Activated CD4-positive, alpha-beta T cell treated with anti-CD3 and anti-CD28 coated beads for 36 hours (primary cell): ENCODE measurements at regions of chr17 and their contacts with region 1.

Region 1: GRCh38 chr17:27601069-27601975 is 29.7 kb upstream of the LGALS9 start:
- DNase-seq: peak; percentile 90
- ATAC-seq: peak; percentile 40
- H3K4me3 Mint-ChIP-seq: no peak overlapping the region
- H3K27ac Mint-ChIP-seq: no peak overlapping the region
- H3K4me1 Mint-ChIP-seq: peaks cover 14% of the 10 kb centered on the region
- H3K27me3 Mint-ChIP-seq: no peaks in the 10 kb centered on the region

Region 2: GRCh38 chr17:27181935-27182334 is 419.4 kb before region 1 on chr17:
- CTCF ChIA-PET with region 1: no interaction called
- POLR2A ChIA-PET with region 1: no interaction called
- intact Hi-C with region 1: no loop called
- DNase-seq: no peak
- ATAC-seq: no peak
- H3K4me3 Mint-ChIP-seq: no peak overlapping the region
- H3K27ac Mint-ChIP-seq: no peak overlapping the region
- H3K4me1 Mint-ChIP-seq: no peaks in the 10 kb centered on the region
- H3K27me3 Mint-ChIP-seq: no peaks in the 10 kb centered on the region

Region 3: GRCh38 chr17:27245230-27245696 is 356.1 kb before region 1 on chr17:
- CTCF ChIA-PET with region 1: interaction called, 3 read pairs
- POLR2A ChIA-PET with region 1: no interaction called
- intact Hi-C with region 1: loop called in 1 of 2 experiments (anchors 2 kb)
- DNase-seq: peak; percentile 78
- ATAC-seq: peak; percentile 96
- H3K4me3 Mint-ChIP-seq: no peak overlapping the region
- H3K27ac Mint-ChIP-seq: no peak overlapping the region
- H3K4me1 Mint-ChIP-seq: peaks cover 14% of the 10 kb centered on the region
- H3K27me3 Mint-ChIP-seq: peaks cover 12% of the 10 kb centered on the region

Region 4: GRCh38 chr17:27455914-27456680 is 145.2 kb before region 1 on chr17 and contains the start of gene KSR1:
- CTCF ChIA-PET with region 1: interaction called, 11 read pairs
- POLR2A ChIA-PET with region 1: interaction called, 3 read pairs
- intact Hi-C with region 1: loop called in 1 of 2 experiments (anchors 1 kb)
- DNase-seq: peak; percentile 92
- ATAC-seq: peak; percentile 93
- H3K4me3 Mint-ChIP-seq: peak within 1 kb of the TSS; percentile 88
- H3K27ac Mint-ChIP-seq: peak within 1 kb of the TSS; percentile 83
- H3K4me1 Mint-ChIP-seq: peaks cover 43% of the 10 kb centered on the region
- H3K27me3 Mint-ChIP-seq: peaks cover 6% of the 10 kb centered on the region
- total RNA-seq, gene KSR1: 96.6 to 113 TPM

Region 5: DNA sequence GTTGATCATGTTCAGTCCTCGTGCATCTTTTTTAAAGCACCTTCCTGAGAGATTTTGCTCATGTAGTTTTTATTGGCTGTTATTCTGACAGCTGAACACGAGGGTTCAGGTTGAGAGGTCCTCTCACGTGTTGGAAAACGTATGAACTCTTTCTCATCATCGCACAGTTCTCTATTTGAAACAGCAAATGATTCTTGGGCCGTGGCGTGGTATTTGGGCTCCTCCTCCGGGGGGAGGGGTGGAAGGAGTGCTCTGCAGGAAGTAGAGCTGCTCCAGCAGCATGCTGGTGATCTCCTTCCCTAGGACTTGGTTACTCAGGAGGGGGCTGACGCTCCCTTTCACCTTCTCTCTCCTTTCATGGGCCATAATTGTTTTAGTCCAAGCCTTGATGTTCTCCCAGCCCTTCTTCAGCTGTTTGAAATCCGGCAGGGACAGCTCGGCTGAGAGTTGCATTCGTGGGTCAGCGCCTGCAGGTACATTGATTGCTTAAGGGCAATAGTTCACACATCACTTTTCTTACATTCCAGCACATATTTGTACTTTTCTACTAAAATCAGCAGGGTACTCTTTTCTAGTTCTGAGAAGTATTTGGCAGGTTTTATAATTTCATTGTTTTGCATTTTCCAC is 74.6 kb before region 1 on chr17:
- CTCF ChIA-PET with region 1: interaction called, 7 read pairs
- POLR2A ChIA-PET with region 1: no interaction called
- intact Hi-C with region 1: loop called in 1 of 2 experiments (anchors 5 kb)
- DNase-seq: peak; percentile 80
- ATAC-seq: peak; percentile 93
- H3K4me3 Mint-ChIP-seq: no peak overlapping the region
- H3K27ac Mint-ChIP-seq: peak overlapping the region; percentile 48
- H3K4me1 Mint-ChIP-seq: peaks cover 74% of the 10 kb centered on the region
- H3K27me3 Mint-ChIP-seq: no peaks in the 10 kb centered on the region

Region 6: DNA sequence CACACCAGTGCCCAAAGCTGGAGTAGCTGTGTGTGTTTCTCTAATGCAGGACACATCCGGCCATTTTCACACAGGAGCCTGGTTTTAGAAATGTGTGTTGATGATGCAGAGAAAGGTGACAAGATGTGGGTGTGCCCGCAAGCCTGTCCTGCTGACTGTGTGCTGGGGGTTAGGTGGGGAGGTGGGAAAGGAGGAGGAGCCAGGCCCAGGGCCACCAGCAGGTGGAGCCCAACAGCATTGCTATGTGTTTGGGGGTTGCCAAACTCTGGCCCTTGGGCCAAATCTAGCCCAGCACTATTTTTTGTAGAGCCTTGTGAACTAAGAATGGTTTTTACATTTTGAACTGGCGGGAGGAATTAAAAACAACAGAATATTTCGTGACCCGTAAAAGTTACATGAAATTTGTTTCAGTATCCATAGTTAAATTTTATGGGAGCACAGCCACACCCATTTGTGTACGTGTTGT is 32.0 kb before region 1 on chr17:
- CTCF ChIA-PET with region 1: interaction called, 25 read pairs
- POLR2A ChIA-PET with region 1: no interaction called
- intact Hi-C with region 1: loop called (anchors 1 to 2 kb)
- DNase-seq: peak; percentile 83
- ATAC-seq: peak; percentile 70
- H3K4me3 Mint-ChIP-seq: no peak overlapping the region
- H3K27ac Mint-ChIP-seq: peak overlapping the region; percentile 68
- H3K4me1 Mint-ChIP-seq: peaks cover 75% of the 10 kb centered on the region
- H3K27me3 Mint-ChIP-seq: no peaks in the 10 kb centered on the region

Region 7: GRCh38 chr17:27899525-27899924 is 298.2 kb after region 1 on chr17:
- CTCF ChIA-PET with region 1: no interaction called
- POLR2A ChIA-PET with region 1: no interaction called
- intact Hi-C with region 1: no loop called
- DNase-seq: no peak
- ATAC-seq: no peak
- H3K4me3 Mint-ChIP-seq: no peak overlapping the region
- H3K27ac Mint-ChIP-seq: no peak overlapping the region
- H3K4me1 Mint-ChIP-seq: no peaks in the 10 kb centered on the region
- H3K27me3 Mint-ChIP-seq: peaks cover 25% of the 10 kb centered on the region